Keratinocyte (primary cell): ENCODE measurements at regions of chr12 and their contacts with region 1.

Region 1: DNA sequence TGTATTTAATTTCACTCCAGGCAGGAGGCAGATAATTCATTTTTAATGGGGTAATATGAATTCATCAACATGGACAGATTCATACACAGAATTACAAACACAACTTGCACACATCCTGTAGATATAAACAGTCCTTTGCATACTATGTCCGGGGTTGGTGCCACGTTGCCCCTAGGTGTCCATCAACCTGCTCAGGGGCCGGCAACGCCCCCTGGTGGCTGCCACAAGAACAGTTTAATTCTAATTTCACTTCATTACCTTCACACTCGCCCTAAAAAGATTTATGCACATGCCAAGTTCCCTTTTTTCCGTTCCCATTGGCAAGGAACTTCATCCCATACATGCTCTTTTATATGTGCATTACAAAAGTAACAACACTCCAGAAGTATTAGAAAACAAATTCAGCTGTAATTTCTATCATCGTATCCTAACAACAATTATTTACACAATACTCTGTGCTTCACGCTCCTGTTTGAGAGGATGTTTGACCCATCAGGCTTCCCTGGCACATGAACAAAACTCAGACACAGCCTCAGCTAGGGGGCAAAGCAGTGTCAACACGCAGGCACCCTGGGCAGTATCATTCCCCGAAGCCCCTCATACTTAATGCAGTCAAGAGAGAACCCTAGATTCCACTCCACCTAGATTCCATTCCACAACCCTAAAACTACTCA is 15.5 kb downstream of the MANSC1 start:
- DNase-seq: no peak
- H3K4me3 ChIP-seq: no peak overlapping the region
- H3K27ac ChIP-seq: no peak overlapping the region
- H3K4me1 ChIP-seq: peaks cover 11% of the 10 kb centered on the region
- H3K27me3 ChIP-seq: no peaks in the 10 kb centered on the region
- CTCF ChIP-seq: peak; percentile 82 to 89 (median 86)

Region 2: GRCh38 chr12:12081836-12082497 is 252.5 kb before region 1 on chr12:
- dilution Hi-C with region 1: loop called (anchors 25 kb)
- DNase-seq: no peak
- H3K4me3 ChIP-seq: no peak overlapping the region
- H3K27ac ChIP-seq: no peak overlapping the region
- H3K4me1 ChIP-seq: no peaks in the 10 kb centered on the region
- H3K27me3 ChIP-seq: no peaks in the 10 kb centered on the region
- CTCF ChIP-seq: peak in 2 of 3 experiments; percentile 24 to 41